GM10248 (cell line): ENCODE measurements at regions of chr3 and their contacts with region 1.

Region 1: GRCh38 chr3:172622916-172623700 is 87.8 kb downstream of the NCEH1 start:
- DNase-seq: peak; percentile 41
- CTCF ChIP-seq: peak; percentile 42

Region 2: DNA sequence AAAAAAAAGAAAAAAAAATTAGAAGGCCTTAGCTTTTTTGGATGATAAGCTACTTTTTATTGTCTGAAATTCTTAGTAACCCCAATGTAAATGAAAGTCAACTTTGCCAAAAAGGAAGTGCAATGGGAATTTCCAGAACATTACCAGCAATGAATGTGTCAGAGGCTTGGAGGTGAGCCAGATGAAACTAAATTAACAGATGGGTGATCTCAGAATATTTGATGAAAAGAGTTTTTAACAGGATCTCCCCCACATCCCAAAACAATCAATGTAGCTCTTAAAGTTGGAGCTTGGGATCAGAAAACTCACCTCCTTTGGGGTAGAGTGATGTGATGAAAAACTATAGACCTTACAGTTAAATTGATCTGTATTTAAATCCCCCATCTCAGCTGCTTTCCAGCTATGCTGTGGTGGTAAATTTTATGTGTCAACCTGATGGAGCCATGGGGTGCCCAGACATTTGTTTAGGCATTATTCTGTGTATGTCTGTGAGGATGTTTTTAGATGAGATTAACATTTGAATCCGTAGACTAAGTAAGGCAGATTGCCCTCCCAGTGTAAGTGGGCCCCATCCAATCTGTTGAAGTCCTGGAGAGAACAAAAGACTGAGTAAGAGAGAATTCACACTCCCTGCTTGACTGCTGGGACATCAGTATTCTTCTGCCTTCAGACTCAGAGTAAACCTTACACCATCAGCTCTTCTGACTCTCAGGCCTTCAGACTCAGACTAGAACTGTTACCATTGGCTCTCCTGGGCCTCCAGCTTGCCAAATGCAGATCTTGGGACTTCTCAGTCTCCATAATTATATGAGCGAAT is 15.6 kb before region 1 on chr3:
- CTCF ChIA-PET with region 1: interaction called, 28 read pairs
- POLR2A ChIA-PET with region 1: interaction called, 9 read pairs
- DNase-seq: no peak
- CTCF ChIP-seq: no peak

Region 3: GRCh38 chr3:172635588-172635987 is 12.5 kb after region 1 on chr3:
- CTCF ChIA-PET with region 1: interaction called, 29 read pairs
- POLR2A ChIA-PET with region 1: no interaction called
- DNase-seq: peak; percentile 73
- CTCF ChIP-seq: no peak